ENCODE measurements at regions of chr3 and their contacts with region 1.

Region 1: GRCh38 chr3:19348929-19349564 is 200.7 kb downstream of the KCNH8 start:
- DNase-seq: no peak
- ATAC-seq: peak; percentile 97
- H3K4me3 ChIP-seq: no peak overlapping the region
- H3K27ac ChIP-seq: no peak overlapping the region
- H3K4me1 ChIP-seq: peaks cover 14% of the 10 kb centered on the region
- H3K27me3 ChIP-seq: no peaks in the 10 kb centered on the region
- CTCF ChIP-seq: peak; percentile 59 to 72 (median 70); a peak in 5 of 6 replicates
- EP300 ChIP-seq: no peak
- POLR2A ChIP-seq: no peak
- RAD21 ChIP-seq: peak; percentile 96

Region 2: GRCh38 chr3:19065027-19065426 is 284.0 kb before region 1 on chr3:
- CTCF ChIA-PET with region 1: interaction called, 6 read pairs
- POLR2A ChIA-PET with region 1: no interaction called
- RAD21 ChIA-PET with region 1: no interaction called
- SMC1A ChIA-PET with region 1: no interaction called
- in situ Hi-C with region 1: no loop called
- intact Hi-C with region 1: loop called (anchors 10 kb)
- DNase-seq: no peak
- ATAC-seq: no peak
- H3K4me3 ChIP-seq: no peak overlapping the region
- H3K27ac ChIP-seq: no peak overlapping the region
- H3K4me1 ChIP-seq: no peaks in the 10 kb centered on the region
- H3K27me3 ChIP-seq: no peaks in the 10 kb centered on the region
- CTCF ChIP-seq: peak; percentile 14 to 36 (median 17); a peak in 2 of 6 replicates
- EP300 ChIP-seq: no peak
- POLR2A ChIP-seq: no peak
- RAD21 ChIP-seq: peak; percentile 77

Region 3: DNA sequence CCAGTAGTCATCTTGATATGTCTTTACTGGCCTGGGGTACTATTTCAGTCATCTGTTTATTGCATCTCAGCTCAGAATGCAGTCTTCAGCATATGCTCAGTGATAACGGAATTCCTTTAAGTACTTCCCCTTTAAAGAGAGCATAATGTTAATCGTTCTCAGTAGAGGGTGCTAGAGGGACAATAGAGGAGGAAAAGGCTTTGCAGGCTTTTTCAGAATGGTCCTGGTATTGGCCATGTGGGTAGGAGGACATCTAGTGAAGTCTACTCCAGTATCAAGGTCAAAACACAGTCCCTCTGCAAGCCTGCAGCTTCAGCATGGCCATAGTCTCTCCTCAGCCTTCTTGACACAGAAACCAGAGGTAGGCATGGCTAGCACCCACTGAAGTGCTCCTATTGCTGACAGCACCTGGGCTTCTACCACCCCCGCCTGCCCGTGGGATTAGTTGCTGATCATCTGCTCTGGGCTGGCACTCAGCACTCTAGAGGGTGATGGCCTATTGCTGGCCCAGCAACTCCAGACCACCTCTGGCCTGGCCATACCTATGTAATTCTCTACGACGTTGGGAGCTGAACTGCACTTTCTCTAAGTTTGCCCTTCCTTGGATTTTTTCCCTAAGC is 135.3 kb before region 1 on chr3:
- CTCF ChIA-PET with region 1: interaction called, 3 read pairs
- POLR2A ChIA-PET with region 1: no interaction called
- RAD21 ChIA-PET with region 1: no interaction called
- SMC1A ChIA-PET with region 1: no interaction called
- in situ Hi-C with region 1: no loop called
- intact Hi-C with region 1: loop called (anchors 5 kb)
- DNase-seq: no peak
- ATAC-seq: peak; percentile 69
- H3K4me3 ChIP-seq: no peak overlapping the region
- H3K27ac ChIP-seq: no peak overlapping the region
- H3K4me1 ChIP-seq: no peaks in the 10 kb centered on the region
- H3K27me3 ChIP-seq: no peaks in the 10 kb centered on the region
- CTCF ChIP-seq: peak; percentile 24 to 35 (median 26); a peak in 3 of 6 replicates
- EP300 ChIP-seq: no peak
- POLR2A ChIP-seq: no peak
- RAD21 ChIP-seq: peak; percentile 55

Region 4: DNA sequence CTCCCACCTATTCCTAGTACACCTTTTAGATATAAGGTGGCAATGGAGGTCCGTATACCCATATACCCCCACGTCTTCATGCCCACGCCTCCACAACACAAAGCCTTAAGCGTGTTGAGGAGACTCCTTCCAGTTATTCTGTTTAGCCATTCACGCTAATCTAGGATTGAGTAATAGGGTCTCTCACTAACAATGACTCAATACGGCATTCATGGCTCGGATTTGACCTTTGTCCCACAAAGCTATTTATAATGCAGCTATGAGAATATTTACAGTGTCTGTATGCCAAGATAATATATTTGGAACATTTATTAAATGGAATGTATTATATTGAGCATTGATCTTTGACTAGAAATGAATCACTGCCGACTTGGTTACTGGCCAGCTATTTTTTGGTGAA is 15.1 kb after region 1 on chr3:
- CTCF ChIA-PET with region 1: interaction called, 23 read pairs
- POLR2A ChIA-PET with region 1: no interaction called
- RAD21 ChIA-PET with region 1: interaction called, 5 read pairs
- SMC1A ChIA-PET with region 1: interaction called, 10 read pairs
- in situ Hi-C with region 1: no loop called
- intact Hi-C with region 1: no loop called
- DNase-seq: no peak
- ATAC-seq: no peak
- H3K4me3 ChIP-seq: no peak overlapping the region
- H3K27ac ChIP-seq: no peak overlapping the region
- H3K4me1 ChIP-seq: peaks cover 8% of the 10 kb centered on the region
- H3K27me3 ChIP-seq: no peaks in the 10 kb centered on the region
- CTCF ChIP-seq: no peak
- EP300 ChIP-seq: no peak
- POLR2A ChIP-seq: no peak
- RAD21 ChIP-seq: no peak

Measured in GM12878 (cell line).